PC-9 (cell line): ENCODE measurements at regions of chr11 and their contacts with region 1.

Region 1: GRCh38 chr11:90822996-90823395 is 600.1 kb upstream of the CHORDC1 start:
- DNase-seq: no peak
- H3K4me3 ChIP-seq: no peak overlapping the region
- H3K27ac ChIP-seq: no peak overlapping the region
- H3K4me1 ChIP-seq: peaks cover 22% of the 10 kb centered on the region
- H3K27me3 ChIP-seq: no peaks in the 10 kb centered on the region
- CTCF ChIP-seq: no peak

Region 2: GRCh38 chr11:91194546-91194945 is 371.6 kb after region 1 on chr11:
- CTCF ChIA-PET with region 1: interaction called, 16 read pairs
- POLR2A ChIA-PET with region 1: no interaction called
- intact Hi-C with region 1: no loop called
- DNase-seq: no peak
- H3K4me3 ChIP-seq: no peak overlapping the region
- H3K27ac ChIP-seq: no peak overlapping the region
- H3K4me1 ChIP-seq: no peaks in the 10 kb centered on the region
- H3K27me3 ChIP-seq: no peaks in the 10 kb centered on the region
- CTCF ChIP-seq: no peak